Breast epithelium (tissue), 4 donors: ENCODE measurements at regions of chrX and their contacts with region 1.

Region 1: DNA sequence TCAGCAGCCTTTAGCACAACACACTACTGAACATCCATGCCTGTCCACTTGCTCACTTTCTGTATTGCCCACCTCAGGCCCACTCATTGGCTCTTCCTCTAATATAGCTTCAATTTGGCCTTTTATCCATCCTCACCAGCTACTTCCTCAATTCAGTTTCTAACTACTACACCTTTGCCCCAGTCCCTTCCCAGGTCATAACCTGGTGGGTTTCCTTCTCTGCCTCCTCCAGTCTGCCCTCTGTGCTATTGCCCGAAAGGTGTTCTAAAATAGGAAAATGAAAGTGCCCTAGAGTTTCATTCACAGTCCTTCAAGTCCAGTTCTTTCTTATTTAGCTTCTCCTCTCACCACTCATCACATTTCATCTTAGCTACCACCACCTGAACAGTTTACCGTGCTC is 23.1 kb downstream of the MOSPD2 start:
- DNase-seq: no peak
- H3K4me3 ChIP-seq: no peak overlapping the region
- H3K27ac ChIP-seq: no peak overlapping the region
- H3K4me1 ChIP-seq: no peaks in the 10 kb centered on the region
- H3K27me3 ChIP-seq: peaks cover 0 to 7% of the 10 kb centered on the region in 2 donors
- CTCF ChIP-seq: no peak
- POLR2A ChIP-seq: no peak

Region 2: GRCh38 chrX:14922437-14922836 is 26.2 kb after region 1 on chrX:
- intact Hi-C with region 1: loop called (anchors 1 kb)
- DNase-seq: no peak
- H3K4me3 ChIP-seq: no peak overlapping the region
- H3K27ac ChIP-seq: no peak overlapping the region
- H3K4me1 ChIP-seq: no peaks in the 10 kb centered on the region
- H3K27me3 ChIP-seq: peaks cover 0 to 7% of the 10 kb centered on the region in 2 donors
- CTCF ChIP-seq: no peak
- POLR2A ChIP-seq: no peak

Region 3: DNA sequence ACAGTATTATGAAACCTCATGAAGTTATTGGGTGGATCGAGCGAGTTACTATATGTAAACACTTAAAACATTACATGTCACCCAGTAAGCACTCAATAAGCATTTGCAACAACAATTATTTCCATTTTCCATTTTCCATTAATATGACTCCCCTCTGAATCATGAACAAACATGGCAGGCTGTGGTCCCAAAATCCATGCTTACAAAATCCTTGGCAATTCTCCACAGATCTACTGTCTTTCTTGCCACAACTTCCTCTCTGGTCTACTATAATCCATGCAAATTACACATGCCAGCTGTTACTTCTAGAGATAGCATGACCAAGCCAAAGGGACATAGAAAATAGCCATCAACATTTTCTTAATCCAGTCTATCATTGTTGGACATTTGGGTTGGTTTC is 397.2 kb after region 1 on chrX:
- intact Hi-C with region 1: no loop called
- DNase-seq: no peak
- H3K4me3 ChIP-seq: no peak overlapping the region
- H3K27ac ChIP-seq: no peak overlapping the region
- H3K4me1 ChIP-seq: no peaks in the 10 kb centered on the region
- H3K27me3 ChIP-seq: peaks cover 0 to 25% of the 10 kb centered on the region in 2 donors
- CTCF ChIP-seq: no peak
- POLR2A ChIP-seq: no peak

Region 4: GRCh38 chrX:15702488-15703371 is 806.5 kb after region 1 on chrX:
- intact Hi-C with region 1: no loop called
- DNase-seq: no peak
- H3K4me3 ChIP-seq: no peak overlapping the region
- H3K27ac ChIP-seq: no peak overlapping the region
- H3K4me1 ChIP-seq: no peaks in the 10 kb centered on the region
- H3K27me3 ChIP-seq: no peaks in the 10 kb centered on the region
- CTCF ChIP-seq: no peak
- POLR2A ChIP-seq: no peak